Sigmoid colon (tissue), 7 donors: ENCODE measurements at regions of chr12 and their contacts with region 1.

Region 1: GRCh38 chr12:4276524-4277204 is 3.1 kb downstream of the CCND2 start:
- DNase-seq: peak; percentile 95
- H3K4me3 ChIP-seq: peak overlapping the region in 3 of 4 donors; percentile 67 to 91 (median 82)
- H3K27ac ChIP-seq: peak overlapping the region; percentile 93 to 99 (median 95)
- H3K4me1 ChIP-seq: peaks cover 0 to 74% (median 70%) of the 10 kb centered on the region in 4 donors
- H3K27me3 ChIP-seq: no peaks in the 10 kb centered on the region
- CTCF ChIP-seq: peak; percentile 93 to 96 (median 96)
- EP300 ChIP-seq: no peak
- POLR2A ChIP-seq: no peak

Region 2: DNA sequence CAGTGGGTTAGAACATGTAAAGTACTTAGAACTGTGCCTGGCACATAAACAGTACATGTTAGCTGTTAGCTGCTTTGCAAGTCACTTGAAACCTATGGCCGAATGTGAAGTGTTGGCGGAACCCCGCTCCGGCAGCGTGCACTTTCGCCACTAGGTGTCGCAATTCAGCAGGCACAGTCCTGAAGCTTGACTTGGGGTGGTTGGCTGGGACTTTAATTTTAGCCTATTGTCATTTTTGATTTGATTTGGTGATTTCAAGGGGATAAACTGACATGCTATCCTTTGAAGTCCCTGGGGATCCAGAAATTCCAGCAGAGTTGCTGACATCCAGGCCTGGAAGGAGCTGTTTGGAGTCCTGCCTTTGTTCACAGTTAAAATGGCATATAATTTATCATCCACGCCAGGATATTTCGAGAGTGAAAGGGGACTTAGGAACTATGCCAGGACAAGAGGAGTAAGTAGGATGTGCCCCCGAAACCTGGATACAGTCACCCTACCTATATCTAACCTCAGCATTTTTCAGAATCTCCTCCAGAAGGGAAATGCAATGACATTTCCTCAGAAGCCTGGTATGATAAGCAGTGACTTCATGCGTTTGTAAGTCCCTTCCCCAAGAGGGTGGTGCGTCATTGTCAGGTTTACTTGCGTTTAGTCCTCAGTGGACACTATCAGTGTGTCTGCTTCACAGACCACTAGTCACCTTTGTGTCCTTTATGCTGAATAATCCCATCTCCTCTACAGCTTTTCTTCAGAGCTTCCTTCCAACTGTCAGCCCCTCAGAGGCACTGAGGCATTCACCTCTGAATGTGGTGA is 1203.0 kb before region 1 on chr12:
- intact Hi-C with region 1: loop called (anchors 10 kb)
- DNase-seq: peak; percentile 89
- H3K4me3 ChIP-seq: no peak overlapping the region
- H3K27ac ChIP-seq: peak overlapping the region in 2 of 4 donors; percentile 15 to 41
- H3K4me1 ChIP-seq: peaks cover 0 to 42% (median 35%) of the 10 kb centered on the region in 4 donors
- H3K27me3 ChIP-seq: no peaks in the 10 kb centered on the region
- CTCF ChIP-seq: peak; percentile 78 to 96 (median 92)
- EP300 ChIP-seq: no peak
- POLR2A ChIP-seq: no peak

Region 3: GRCh38 chr12:3885277-3886094 is 391.2 kb before region 1 on chr12:
- intact Hi-C with region 1: loop called (anchors 2 kb)
- DNase-seq: no peak
- H3K4me3 ChIP-seq: peak overlapping the region; percentile 15 to 39 (median 34)
- H3K27ac ChIP-seq: peak overlapping the region; percentile 67 to 72 (median 68)
- H3K4me1 ChIP-seq: peaks cover 0 to 10% (median 0%) of the 10 kb centered on the region in 4 donors
- H3K27me3 ChIP-seq: no peaks in the 10 kb centered on the region
- CTCF ChIP-seq: peak; percentile 57 to 83 (median 76)
- EP300 ChIP-seq: no peak
- POLR2A ChIP-seq: no peak

Region 4: DNA sequence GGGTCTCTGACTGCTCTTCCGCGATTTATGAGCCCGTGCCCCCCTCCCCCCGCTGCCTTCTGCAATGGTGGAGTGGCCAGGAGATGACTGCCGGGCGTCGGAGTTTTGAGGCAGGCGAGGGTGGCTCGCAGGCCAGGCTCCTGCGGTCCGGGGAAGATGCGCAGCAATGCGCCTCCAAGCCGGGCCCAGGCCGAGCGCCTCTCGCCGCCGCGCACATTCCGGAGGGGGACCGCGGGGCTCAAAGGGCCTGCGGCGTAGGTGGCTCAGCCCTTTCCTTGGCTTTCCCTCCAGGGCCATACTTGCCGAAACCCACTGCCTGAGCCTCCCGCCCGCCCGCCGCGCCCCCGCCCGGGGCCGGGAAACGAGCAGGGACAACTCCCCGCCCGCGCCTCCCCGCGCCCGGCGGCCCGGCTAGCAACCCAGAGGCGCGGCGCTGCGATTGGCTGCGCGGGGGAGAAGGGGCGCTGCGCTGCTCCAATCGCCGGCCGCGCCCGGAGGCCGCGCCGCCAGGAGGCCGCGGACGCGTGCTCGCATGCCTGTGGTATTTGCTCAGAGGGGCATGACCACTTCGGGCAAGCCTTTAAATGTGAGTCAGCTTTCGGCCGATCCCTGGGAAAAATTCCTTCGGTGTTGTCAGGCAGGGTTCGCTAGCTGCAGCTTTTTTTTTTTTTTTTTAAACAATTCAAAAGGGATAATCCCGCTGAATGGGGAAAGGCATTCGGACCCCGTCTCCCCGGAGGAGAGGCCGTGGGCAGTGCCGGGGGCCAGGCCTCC is 245.5 kb before region 1 on chr12:
- intact Hi-C with region 1: loop called (anchors 2 kb)
- DNase-seq: peak; percentile 95
- H3K4me3 ChIP-seq: peak overlapping the region; percentile 36 to 62 (median 52)
- H3K27ac ChIP-seq: peak overlapping the region; percentile 71 to 93 (median 88)
- H3K4me1 ChIP-seq: peaks cover 0 to 14% (median 12%) of the 10 kb centered on the region in 4 donors
- H3K27me3 ChIP-seq: no peaks in the 10 kb centered on the region
- CTCF ChIP-seq: peak in 1 of 4 experiments; percentile 17
- EP300 ChIP-seq: peak in 1 of 4 donors; percentile 31
- POLR2A ChIP-seq: peak in 1 of 2 donors; percentile 59

Region 5: GRCh38 chr12:4320853-4321701 is 44.4 kb after region 1 on chr12 and contains the start of gene TIGAR:
- intact Hi-C with region 1: loop called (anchors 5 kb)
- DNase-seq: peak; percentile 97
- H3K4me3 ChIP-seq: peak within 1 kb of the TSS; percentile 84 to 96 (median 87)
- H3K27ac ChIP-seq: peak within 1 kb of the TSS; percentile 88 to 96 (median 94)
- H3K4me1 ChIP-seq: peaks cover 0 to 31% (median 20%) of the 10 kb centered on the region in 4 donors
- H3K27me3 ChIP-seq: no peaks in the 10 kb centered on the region
- CTCF ChIP-seq: no peak
- EP300 ChIP-seq: no peak
- POLR2A ChIP-seq: peak; percentile 86 to 89
- total RNA-seq, gene TIGAR: 4.4 to 6.0 (median 5.2) TPM

Region 6: DNA sequence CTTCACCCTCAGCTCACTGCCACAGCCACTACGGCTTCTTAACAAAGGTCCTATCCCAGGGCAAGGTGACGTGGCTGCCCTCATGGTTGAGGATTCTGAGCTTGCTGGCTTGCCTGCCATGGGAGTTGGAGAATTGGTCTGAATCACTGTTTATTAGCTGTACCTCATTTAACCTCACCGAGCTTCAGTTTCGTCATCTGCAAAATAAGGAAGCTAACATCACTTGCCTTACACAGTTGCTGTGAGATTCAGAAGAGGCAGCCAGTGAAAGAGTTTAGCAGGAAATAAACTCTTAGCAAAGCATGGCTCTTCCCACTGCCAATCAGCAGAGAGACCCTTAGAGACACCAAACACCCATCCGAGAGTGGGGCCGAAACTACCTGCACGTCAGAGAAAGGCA is 543.0 kb after region 1 on chr12:
- intact Hi-C with region 1: no loop called
- DNase-seq: no peak
- H3K4me3 ChIP-seq: no peak overlapping the region
- H3K27ac ChIP-seq: peak overlapping the region in 1 of 4 donors; percentile 4
- H3K4me1 ChIP-seq: peaks cover 0 to 25% (median 23%) of the 10 kb centered on the region in 4 donors
- H3K27me3 ChIP-seq: peaks cover 0 to 10% (median 3%) of the 10 kb centered on the region in 3 donors
- CTCF ChIP-seq: no peak
- EP300 ChIP-seq: no peak
- POLR2A ChIP-seq: no peak